IMR-90 (cell line): ENCODE measurements at regions of chr15 and their contacts with region 1.

Region 1: DNA sequence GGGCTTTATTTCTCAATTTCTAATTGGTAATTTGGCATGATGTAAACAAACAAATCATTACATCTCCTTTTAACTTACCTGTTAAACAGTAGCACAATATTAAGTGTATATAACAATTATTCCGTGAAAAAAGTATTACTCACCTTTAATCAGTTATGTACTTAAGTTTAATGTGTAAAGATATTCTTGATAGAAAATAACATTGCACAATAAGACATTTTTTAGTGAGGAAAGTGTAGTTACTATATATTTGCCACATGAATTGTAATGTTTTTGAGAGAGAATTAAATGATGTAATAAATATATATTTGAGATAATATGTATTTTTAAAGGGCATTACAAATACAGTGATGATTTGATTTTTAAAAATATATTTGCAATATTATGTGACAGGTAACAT is 10.9 kb upstream of the CCNB2 start:
- DNase-seq: no peak
- ATAC-seq: no peak
- H3K4me3 ChIP-seq: no peak overlapping the region
- H3K27ac ChIP-seq: no peak overlapping the region
- H3K4me1 ChIP-seq: no peaks in the 10 kb centered on the region
- H3K27me3 ChIP-seq: no peaks in the 10 kb centered on the region
- CTCF ChIP-seq: no peak
- POLR2A ChIP-seq: no peak
- RAD21 ChIP-seq: no peak

Region 2: GRCh38 chr15:59051873-59052861 is 41.9 kb before region 1 on chr15:
- CTCF ChIA-PET with region 1: no interaction called
- POLR2A ChIA-PET with region 1: no interaction called
- dilution Hi-C with region 1: no loop called
- in situ Hi-C with region 1: no loop called
- intact Hi-C with region 1: loop called (anchors 5 kb)
- DNase-seq: no peak
- ATAC-seq: no peak
- H3K4me3 ChIP-seq: no peak overlapping the region
- H3K27ac ChIP-seq: no peak overlapping the region
- H3K4me1 ChIP-seq: no peaks in the 10 kb centered on the region
- H3K27me3 ChIP-seq: no peaks in the 10 kb centered on the region
- CTCF ChIP-seq: no peak
- POLR2A ChIP-seq: no peak
- RAD21 ChIP-seq: no peak

Region 3: DNA sequence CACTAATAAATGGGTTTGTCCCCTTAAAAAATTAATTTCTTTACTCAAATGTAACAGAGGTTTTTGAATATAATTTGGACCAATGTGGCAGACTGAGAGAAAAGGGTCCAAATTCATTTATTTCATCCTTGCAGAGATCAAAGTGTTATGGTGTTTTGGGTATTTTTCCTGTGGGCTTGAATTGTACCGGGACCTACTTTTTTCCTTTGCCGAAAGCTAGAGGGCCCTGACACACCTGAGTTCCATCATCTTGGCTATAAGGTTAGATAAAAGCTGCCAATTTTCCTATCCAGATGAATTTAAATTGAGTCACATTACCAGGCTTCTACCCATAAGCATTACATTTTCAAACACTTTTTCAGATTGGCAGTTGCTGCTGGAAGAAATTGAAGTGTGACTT is 11.8 kb after region 1 on chr15:
- CTCF ChIA-PET with region 1: no interaction called
- POLR2A ChIA-PET with region 1: no interaction called
- dilution Hi-C with region 1: no loop called
- in situ Hi-C with region 1: no loop called
- intact Hi-C with region 1: no loop called
- DNase-seq: no peak
- ATAC-seq: no peak
- H3K4me3 ChIP-seq: peak overlapping the region; percentile 77
- H3K27ac ChIP-seq: no peak overlapping the region; the same call in 1 of the 2 replicates
- H3K4me1 ChIP-seq: no peaks in the 10 kb centered on the region
- H3K27me3 ChIP-seq: no peaks in the 10 kb centered on the region
- CTCF ChIP-seq: no peak
- POLR2A ChIP-seq: no peak
- RAD21 ChIP-seq: no peak

Region 4: DNA sequence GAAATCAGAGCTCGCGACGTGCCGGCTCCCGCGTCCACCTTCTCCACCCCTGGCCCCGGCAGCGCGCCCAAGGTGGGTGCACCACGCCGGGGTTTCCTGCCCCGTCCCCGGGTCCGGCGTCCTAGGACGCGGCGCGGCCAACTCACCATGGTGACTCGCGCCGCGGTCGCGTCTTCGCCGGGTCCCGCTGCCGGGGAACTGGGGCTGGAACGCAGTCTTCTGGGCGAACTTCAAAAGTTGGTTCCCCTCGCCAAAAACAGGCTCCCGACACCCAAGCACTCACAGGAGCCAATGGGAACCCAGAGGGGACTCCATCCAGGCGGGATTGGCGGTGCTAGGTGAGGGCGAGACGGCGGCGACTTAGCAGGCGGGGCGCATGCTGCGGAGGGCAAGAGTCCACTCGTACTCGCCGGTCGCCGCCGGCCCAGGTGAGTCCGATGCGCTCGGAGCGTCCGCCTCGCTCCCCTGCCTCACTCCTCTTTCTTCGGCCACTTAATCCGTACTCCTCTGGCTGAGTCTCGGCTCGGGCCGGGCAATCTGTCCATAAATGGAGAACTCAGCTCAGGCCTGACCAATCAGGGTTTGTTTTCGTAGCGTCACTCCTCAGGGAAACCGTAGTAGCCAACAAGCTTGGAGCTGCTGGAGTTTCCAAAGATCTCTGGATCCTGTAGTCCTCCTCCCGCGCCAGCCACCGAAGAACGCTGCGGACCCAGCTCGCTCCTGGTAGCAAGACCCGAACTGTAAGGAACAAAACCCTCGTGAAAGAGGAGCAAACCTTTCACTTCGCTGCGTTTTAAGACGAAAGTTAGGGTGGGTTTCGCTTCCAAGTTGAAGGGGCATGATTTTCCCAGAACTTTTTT is 278.5 kb after region 1 on chr15 and contains the start of gene MYO1E:
- CTCF ChIA-PET with region 1: no interaction called
- POLR2A ChIA-PET with region 1: no interaction called
- dilution Hi-C with region 1: no loop called
- in situ Hi-C with region 1: no loop called
- intact Hi-C with region 1: no loop called
- DNase-seq: peak; percentile 97
- ATAC-seq: peak; percentile 94
- H3K4me3 ChIP-seq: peak within 1 kb of the TSS; percentile 67
- H3K27ac ChIP-seq: peak within 1 kb of the TSS; percentile 88
- H3K4me1 ChIP-seq: peaks cover 3% of the 10 kb centered on the region; the same call in 1 of the 2 replicates
- H3K27me3 ChIP-seq: no peaks in the 10 kb centered on the region
- CTCF ChIP-seq: no peak
- POLR2A ChIP-seq: peak; percentile 88
- RAD21 ChIP-seq: no peak
- total RNA-seq, gene MYO1E: 35.8 and 37.3 TPM in 2 replicates